AG04450 (cell line): ENCODE measurements at regions of chr3 and their contacts with region 1.

Region 1: GRCh38 chr3:188954590-188955208 is 217.1 kb upstream of the TPRG1 start:
- DNase-seq: peak; percentile 71
- H3K4me3 ChIP-seq: no peak overlapping the region
- H3K27ac ChIP-seq: no peak overlapping the region
- H3K27me3 ChIP-seq: no peaks in the 10 kb centered on the region
- CTCF ChIP-seq: peak; percentile 97

Region 2: GRCh38 chr3:187745201-187746058 is 1209.3 kb before region 1 on chr3 and contains the start of gene BCL6:
- CTCF ChIA-PET with region 1: interaction called, 314 read pairs
- POLR2A ChIA-PET with region 1: interaction called, 8 read pairs
- DNase-seq: peak; percentile 97
- H3K4me3 ChIP-seq: peak within 1 kb of the TSS; percentile 89
- H3K27ac ChIP-seq: peak within 1 kb of the TSS; percentile 99
- H3K27me3 ChIP-seq: peaks cover 3% of the 10 kb centered on the region
- CTCF ChIP-seq: no peak
- polyA plus RNA-seq, gene BCL6: 12.8 and 19.2 TPM in 2 replicates

Region 3: GRCh38 chr3:188533612-188534357 is 420.9 kb before region 1 on chr3:
- CTCF ChIA-PET with region 1: interaction called, 14 read pairs
- POLR2A ChIA-PET with region 1: no interaction called
- DNase-seq: no peak
- H3K4me3 ChIP-seq: no peak overlapping the region
- H3K27ac ChIP-seq: no peak overlapping the region
- H3K27me3 ChIP-seq: no peaks in the 10 kb centered on the region
- CTCF ChIP-seq: no peak

Region 4: DNA sequence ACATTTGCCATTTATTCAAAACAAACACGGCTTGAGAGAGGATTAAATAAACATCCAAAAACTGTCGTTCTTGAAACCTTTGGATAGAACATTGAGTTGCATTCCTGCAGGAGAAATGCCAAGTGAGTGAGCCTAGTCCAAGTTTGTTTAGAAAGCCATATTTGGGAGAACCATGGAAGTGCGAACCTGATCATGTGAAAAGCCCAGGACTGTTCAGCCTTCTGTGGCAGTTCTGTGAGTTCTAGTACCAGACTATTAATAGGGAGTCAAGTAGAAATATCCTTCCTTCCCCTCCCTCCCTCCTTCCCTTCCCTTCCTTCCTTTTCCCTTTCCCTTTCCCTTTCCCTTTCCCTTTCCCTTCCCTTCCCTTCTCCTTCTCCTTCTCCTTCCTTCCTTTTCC is 330.3 kb before region 1 on chr3:
- CTCF ChIA-PET with region 1: interaction called, 15 read pairs
- POLR2A ChIA-PET with region 1: no interaction called
- DNase-seq: peak; percentile 51
- H3K4me3 ChIP-seq: no peak overlapping the region
- H3K27ac ChIP-seq: peak overlapping the region; percentile 25
- H3K27me3 ChIP-seq: no peaks in the 10 kb centered on the region
- CTCF ChIP-seq: no peak

Region 5: GRCh38 chr3:188712248-188712924 is 242.3 kb before region 1 on chr3:
- CTCF ChIA-PET with region 1: interaction called, 11 read pairs
- POLR2A ChIA-PET with region 1: no interaction called
- DNase-seq: peak; percentile 55
- H3K4me3 ChIP-seq: no peak overlapping the region; the same call in 1 of the 2 replicates
- H3K27ac ChIP-seq: peak overlapping the region; percentile 82
- H3K27me3 ChIP-seq: no peaks in the 10 kb centered on the region
- CTCF ChIP-seq: no peak

Region 6: GRCh38 chr3:188926786-188927511 is 27.8 kb before region 1 on chr3:
- CTCF ChIA-PET with region 1: no interaction called
- POLR2A ChIA-PET with region 1: no interaction called
- DNase-seq: no peak
- H3K4me3 ChIP-seq: no peak overlapping the region
- H3K27ac ChIP-seq: no peak overlapping the region
- H3K27me3 ChIP-seq: no peaks in the 10 kb centered on the region
- CTCF ChIP-seq: no peak

Region 7: GRCh38 chr3:189041482-189042090 is 86.9 kb after region 1 on chr3:
- CTCF ChIA-PET with region 1: interaction called, 10 read pairs
- POLR2A ChIA-PET with region 1: no interaction called
- DNase-seq: no peak
- H3K4me3 ChIP-seq: no peak overlapping the region
- H3K27ac ChIP-seq: no peak overlapping the region
- H3K27me3 ChIP-seq: no peaks in the 10 kb centered on the region
- CTCF ChIP-seq: peak; percentile 52